ENCODE measurements at regions of chr18 and their contacts with region 1.

Region 1: DNA sequence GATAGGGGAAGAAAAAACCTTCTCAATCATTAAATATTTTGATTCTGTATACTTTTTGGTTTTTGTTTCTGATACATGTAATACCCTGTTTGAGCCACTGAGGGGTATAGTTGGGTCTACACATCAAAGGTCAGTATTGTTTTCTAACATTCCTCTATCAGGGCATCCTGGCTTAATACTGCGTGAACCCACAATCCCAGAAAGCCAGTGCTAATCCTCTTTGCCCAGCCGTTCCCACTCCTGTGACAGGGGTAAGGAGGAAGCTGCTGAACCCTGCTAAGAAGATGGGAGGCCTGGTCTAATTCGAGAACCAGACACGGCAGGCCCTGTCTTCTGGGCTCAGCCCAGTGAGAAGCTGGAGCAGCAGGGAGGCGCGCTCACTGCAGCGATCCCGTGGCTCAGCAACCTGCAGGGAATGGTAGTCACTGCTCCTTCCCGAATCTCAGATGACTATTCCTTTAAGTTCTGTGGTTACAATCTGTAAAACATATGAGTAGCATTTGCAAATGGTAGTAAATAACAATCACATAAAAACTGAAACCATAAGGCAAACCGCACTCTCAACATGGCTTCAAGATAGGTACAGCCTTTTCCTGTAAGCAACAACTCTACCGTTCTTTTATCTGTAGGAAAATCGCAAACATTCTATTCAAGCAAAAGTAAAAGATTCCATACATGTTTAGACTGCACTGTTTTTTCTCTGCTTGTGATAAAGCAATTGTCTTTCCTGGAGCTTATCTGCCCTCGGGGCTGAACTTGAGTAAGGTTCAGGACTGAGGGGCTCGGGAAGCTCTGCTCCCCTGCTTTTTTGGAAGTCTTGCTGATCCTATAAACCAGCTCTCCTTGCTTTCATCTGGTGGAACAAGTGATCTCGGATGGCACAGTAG is 87.0 kb downstream of the EPB41L3 start:
- DNase-seq: peak; percentile 41
- ATAC-seq: peak; percentile 90

Region 2: DNA sequence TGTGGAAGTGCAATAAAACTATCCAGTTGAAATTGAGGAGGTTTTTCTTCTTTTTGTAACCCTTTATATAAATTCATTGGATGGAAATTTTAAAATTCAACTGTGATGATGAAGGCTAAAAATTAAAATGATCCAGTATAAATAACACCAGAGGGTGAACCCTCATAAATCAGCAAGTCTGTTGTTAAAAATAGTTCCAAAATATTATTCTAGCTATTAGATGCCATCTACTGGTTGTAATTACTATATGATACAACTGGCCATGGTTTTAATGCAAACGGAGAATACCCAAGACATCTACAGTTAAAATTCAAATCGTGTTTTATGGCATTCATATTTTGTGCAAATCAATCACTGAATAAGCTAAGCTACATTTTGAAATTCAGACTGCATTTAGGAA is 384.7 kb after region 1 on chr18:
- intact Hi-C with region 1: loop called (anchors 10 kb)
- DNase-seq: no peak
- ATAC-seq: no peak

Measured in left ventricle myocardium superior (tissue), 1 donor.